Cardiac septum (tissue), 1 donor: ENCODE measurements at regions of chr16 and their contacts with region 1.

Region 1: DNA sequence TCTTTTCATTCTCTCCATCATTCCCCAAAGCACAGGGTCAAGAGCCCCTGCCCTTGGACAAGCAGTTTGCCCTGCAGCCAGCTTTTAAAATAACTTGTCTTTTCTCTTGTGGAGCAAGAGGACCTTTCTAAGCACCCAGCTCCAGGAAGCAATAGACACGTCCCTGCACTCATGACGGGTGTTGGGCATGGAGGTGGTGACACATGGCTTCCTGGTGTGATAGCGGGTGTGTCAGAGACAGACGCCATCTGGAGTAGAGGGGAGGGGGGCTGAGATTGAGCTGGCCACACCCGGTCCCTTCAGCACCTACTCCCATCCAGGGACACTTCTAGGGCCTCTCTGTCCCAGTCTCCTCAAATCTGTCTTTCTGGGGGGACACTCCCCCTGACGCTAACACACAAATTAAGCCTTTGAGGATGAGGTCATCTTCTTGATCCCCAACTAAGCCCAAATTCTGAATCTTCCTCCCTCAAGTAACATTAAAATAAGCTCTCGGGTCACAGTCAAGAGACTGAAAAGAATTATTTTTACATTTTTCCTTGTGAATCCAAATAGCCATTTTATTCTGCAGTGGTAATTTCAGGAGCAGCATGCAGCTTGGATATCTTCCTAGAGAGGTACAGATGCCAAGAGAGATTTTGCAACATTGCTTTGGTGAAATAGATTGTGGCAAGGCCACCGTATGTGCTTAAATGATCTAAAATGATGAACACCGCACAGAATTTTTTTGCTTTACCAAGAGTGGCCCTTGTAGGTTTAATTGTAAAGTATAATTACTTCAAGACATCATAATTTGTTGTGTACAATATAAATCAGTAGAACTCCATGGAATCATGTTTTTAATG is 216.6 kb upstream of the IRX3 start:
- DNase-seq: peak; percentile 82

Region 2: DNA sequence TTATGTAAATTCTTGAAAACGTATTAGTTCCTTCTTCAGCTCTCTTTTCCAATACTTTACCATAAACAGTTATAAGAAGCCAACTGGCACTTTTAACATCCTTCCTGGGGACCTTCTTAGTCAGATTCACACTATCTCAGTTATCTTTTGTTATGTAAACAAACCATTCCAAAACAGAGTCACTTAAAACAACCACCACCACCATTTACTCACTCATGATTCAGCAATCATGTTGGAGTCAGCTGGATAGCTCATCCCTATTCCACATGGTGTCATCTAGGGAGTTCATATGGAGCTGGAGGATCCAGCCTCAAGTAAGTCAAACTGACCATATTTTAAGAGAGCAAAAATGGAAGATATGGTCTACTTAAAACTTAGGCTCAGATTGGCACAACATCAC is 23.7 kb after region 1 on chr16:
- intact Hi-C with region 1: loop called (anchors 2 kb)
- DNase-seq: no peak

Region 3: GRCh38 chr16:54577651-54578128 is 74.5 kb after region 1 on chr16:
- intact Hi-C with region 1: no loop called
- DNase-seq: no peak

Region 4: DNA sequence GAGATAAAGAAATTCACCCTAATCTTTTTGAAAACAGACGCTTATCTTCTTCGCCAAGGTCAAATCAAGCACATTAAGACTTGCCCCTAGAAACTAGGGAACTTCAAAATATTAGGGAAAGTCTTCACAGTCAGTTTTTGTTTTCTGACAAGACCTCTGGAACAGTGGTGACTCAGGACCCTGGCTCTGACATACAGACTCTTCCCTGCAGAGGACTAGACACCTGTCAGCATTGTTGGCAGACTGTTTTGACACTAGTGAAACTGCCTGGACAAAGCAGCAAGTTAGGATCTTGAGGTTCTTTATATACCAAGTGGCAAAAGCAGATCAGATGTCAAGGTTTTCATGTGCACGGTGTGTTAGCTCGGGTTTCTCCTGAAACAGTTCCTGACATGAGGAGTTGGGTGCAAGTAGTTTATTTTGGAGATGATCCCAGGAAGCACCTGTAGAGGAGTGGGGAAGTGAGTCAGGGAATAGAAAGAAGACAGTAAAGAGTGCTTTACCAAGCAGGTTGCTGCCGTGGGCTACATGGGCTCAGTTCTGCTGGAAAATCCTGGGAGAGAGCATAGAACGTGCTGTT is 245.5 kb after region 1 on chr16:
- intact Hi-C with region 1: no loop called
- DNase-seq: no peak